Left ventricle myocardium superior (tissue), 1 donor: ENCODE measurements at regions of chr15 and their contacts with region 1.

Region 1: DNA sequence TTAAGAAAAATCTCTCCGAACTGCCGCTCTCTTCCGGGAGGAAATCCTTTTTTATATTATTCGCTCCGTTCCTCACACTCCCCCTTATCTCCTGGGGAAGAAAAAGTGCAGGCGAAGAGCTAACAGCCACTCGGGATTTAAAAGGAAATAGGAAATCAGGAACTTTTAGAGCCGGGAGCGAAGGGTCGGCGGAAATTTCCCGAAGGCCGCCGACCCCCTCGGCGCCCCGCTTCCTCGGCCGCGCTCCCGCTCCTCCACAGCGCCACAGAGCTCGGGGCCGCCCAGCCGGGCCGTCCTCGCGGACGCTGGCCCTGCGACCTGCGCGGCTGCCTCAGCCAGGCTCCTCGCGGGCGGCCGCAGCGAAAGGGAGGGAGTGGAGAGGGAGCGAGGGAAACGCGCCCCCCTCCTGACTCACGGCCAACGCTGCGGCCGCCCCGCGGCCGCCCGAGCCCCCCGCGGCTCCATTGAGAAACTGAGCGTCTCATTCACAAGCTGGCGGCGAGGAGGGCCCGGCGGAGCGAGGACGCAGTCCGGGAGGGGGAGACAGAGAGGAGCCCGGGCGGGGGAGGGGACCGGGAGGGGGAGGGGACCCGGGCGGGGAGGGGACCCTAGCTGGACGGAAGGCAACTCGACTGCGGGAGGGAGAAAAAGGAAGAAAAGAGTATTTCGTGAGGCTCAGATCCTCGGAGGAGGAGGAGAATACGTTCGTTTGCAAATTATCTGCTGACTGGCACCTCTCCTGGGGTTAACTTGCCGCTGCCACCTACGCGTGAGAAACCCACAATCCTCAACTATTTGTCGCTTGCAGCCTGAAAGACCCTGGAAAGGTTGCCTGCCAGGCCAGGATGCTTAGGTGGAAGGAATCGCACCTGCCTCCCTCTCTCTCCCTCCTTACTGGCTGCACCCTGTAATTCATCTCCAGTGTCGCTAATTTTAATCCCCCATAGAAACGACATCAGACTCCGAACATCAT is at the start of gene PTPN9:
- DNase-seq: peak; percentile 89
- ATAC-seq: peak; percentile 92
- total RNA-seq, gene PTPN9: 6.6 TPM

Region 2: GRCh38 chr15:75532413-75533147 is 46.7 kb before region 1 on chr15:
- intact Hi-C with region 1: loop called (anchors 5 kb)
- DNase-seq: peak; percentile 54
- ATAC-seq: peak; percentile 95

Region 3: GRCh38 chr15:75857886-75858285 is 278.7 kb after region 1 on chr15:
- intact Hi-C with region 1: no loop called
- DNase-seq: no peak
- ATAC-seq: no peak